CD14-positive monocyte (primary cell): ENCODE measurements at regions of chr3 and their contacts with region 1.

Region 1: DNA sequence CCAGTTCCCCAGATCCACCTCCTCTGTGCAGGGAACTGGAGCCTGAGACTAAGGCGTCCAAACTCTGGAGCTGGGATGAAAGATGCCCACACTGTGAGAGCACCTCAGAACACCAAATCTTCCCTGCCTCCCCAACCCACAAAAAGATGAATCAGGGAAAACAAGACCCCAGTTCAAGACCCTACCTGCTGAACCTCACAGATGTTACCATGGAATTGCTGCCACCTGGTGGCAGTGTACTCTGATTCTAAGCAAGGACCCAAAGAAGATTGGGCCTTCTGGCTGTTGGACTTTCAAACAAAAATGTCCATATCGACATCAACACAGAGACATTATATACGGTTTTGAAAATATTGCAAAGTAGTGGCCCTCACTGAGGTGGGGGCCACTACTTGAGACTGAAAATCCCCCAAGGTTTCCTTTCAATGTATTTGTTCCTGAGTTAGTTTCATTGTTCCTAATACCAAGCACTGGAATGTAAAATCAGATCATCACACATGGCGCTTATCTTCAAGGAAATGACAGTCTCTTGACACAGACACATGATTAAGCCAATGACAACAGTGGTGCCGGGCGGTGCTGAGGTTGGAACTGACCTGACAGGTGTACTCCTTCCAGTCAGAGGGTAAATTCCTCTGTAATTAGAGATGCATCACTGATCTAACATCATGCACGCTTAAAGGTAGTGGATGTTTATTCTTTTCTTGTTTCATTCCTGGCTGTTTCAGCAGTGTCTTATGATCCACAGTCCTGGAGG is 67.6 kb downstream of the SLC6A11 start:
- DNase-seq: no peak
- H3K4me3 ChIP-seq: no peak overlapping the region
- H3K4me3 Mint-ChIP-seq: no peak overlapping the region
- H3K27ac ChIP-seq: no peak overlapping the region
- H3K27ac Mint-ChIP-seq: no peak overlapping the region
- H3K4me1 ChIP-seq: peaks cover 5 to 6% of the 10 kb centered on the region in 2 donors
- H3K4me1 Mint-ChIP-seq: peaks cover 7% of the 10 kb centered on the region
- H3K27me3 ChIP-seq: no peaks in the 10 kb centered on the region
- H3K27me3 Mint-ChIP-seq: peaks cover 0 to 5% (median 2%) of the 10 kb centered on the region in 3 donors
- CTCF ChIP-seq: peak; percentile 3

Region 2: DNA sequence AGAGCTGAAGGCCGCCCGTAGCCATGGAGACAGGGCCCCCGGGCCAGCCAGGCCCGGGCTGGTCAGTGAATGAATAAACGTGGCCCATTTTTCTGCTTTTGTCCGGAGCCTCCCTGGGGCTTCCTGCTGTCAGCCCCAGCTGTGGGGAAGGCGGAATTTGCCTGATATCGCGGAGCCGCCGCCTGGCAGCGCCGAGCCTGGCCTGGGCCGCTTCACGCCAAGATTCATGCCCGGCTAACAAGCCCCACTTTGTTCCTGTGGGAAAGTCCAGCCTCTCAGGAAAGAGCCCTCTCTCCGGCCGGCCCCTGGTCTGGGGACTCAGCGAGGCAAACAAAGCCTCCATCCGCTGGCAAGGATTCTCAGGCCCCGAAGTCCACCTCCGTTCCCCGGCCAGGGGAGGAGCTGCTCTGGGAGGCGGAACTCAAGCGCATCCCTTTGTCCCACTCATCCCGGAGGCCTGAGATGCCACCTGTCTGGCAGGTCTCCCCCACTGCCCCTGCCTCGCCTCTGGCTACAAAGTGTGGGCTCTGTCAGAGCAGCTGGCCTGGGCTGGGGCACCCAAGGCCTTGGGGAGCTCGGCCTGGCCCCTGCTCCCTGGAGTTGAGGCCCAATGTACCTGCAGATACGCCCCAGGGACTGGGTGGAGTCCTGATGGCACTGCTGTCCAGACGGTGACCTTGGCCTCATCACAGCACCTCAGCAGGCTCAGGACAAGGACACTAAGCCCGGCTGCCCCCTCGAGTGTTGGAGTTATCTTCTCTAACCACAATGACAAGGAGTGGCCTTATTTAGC is 119.2 kb before region 1 on chr3:
- intact Hi-C with region 1: loop called (anchors 5 kb)
- DNase-seq: no peak
- H3K4me3 ChIP-seq: no peak overlapping the region
- H3K4me3 Mint-ChIP-seq: no peak overlapping the region
- H3K27ac ChIP-seq: no peak overlapping the region
- H3K27ac Mint-ChIP-seq: no peak overlapping the region
- H3K4me1 ChIP-seq: no peaks in the 10 kb centered on the region
- H3K4me1 Mint-ChIP-seq: no peaks in the 10 kb centered on the region
- H3K27me3 ChIP-seq: no peaks in the 10 kb centered on the region
- H3K27me3 Mint-ChIP-seq: peaks cover 9 to 17% (median 12%) of the 10 kb centered on the region in 3 donors
- CTCF ChIP-seq: no peak

Region 3: DNA sequence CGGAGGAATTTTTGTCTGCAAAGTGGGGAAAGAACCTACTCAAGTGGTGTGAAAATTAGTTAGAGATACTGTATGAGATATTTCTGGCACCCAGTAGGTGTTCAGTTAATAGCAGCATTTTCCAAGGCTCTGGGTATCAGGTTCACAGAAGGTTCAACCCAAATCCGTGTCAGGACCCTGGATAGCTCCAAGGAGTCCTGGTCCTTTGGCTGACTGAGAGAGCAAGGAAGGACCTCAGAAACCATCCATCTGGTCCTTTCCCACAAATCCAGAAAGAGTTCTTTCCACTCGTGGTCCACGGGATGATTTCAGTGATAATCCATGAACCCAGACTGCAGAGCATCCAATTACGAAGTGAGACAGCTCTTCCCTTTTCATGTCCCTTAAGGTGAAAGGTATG is 16.3 kb before region 1 on chr3:
- intact Hi-C with region 1: no loop called
- DNase-seq: no peak
- H3K4me3 ChIP-seq: no peak overlapping the region
- H3K4me3 Mint-ChIP-seq: no peak overlapping the region
- H3K27ac ChIP-seq: no peak overlapping the region
- H3K27ac Mint-ChIP-seq: no peak overlapping the region
- H3K4me1 ChIP-seq: no peaks in the 10 kb centered on the region
- H3K4me1 Mint-ChIP-seq: no peaks in the 10 kb centered on the region
- H3K27me3 ChIP-seq: no peaks in the 10 kb centered on the region
- H3K27me3 Mint-ChIP-seq: peaks cover 2 to 7% (median 2%) of the 10 kb centered on the region in 3 donors
- CTCF ChIP-seq: no peak